ENCODE measurements at regions of chr7 and their contacts with region 1.

Region 1: GRCh38 chr7:44693721-44694285 is 54.8 kb upstream of the ZMIZ2 start:
- DNase-seq: peak; percentile 54 to 58
- ATAC-seq: peak; percentile 80 to 97 (median 90)
- H3K4me3 ChIP-seq: no peak overlapping the region
- H3K27ac ChIP-seq: peak overlapping the region; percentile 57 to 87 (median 72)
- H3K4me1 ChIP-seq: peaks cover 0 to 15% (median 0%) of the 10 kb centered on the region in 9 donors
- H3K27me3 ChIP-seq: no peaks in the 10 kb centered on the region
- CTCF ChIP-seq: no peak

Region 2: DNA sequence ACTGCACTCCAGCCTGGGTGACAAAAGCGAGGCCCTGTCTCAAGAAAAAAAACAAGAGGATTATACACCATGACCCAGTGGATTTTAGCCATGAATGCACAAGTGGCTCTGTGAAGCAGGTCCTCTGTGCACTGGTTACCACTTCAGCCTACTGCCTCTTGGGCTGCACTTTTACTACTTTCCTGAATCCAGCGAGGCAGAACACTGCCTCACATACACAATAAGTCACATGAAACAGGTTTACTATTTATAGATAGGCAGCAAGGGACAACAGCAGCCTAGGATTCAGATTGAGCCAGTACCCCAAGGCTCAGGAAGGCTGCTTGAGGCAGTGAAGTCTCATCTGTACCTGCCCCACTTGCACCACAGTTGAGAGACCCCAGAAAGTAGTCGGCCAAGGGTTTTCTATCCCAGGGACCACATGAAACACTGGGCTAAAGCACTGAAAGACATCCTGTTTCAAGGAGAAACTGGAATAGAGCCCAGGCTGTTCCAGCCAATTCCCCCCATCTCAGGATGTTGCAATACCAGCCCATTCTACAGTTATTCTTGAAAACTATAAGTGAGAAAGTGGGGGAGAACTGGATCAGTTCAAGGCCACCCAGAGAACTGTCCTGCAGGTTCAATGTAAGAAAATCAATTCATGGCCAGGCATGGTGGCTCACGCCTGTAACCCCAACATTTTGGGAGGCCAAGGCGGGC is 97.7 kb before region 1 on chr7:
- intact Hi-C with region 1: loop called in 2 of 10 experiments (anchors 10 kb)
- DNase-seq: peak in 1 of 2 donors; percentile 14
- ATAC-seq: peak; percentile 71 to 97 (median 88)
- H3K4me3 ChIP-seq: no peak overlapping the region
- H3K27ac ChIP-seq: peak overlapping the region; percentile 23 to 77 (median 72)
- H3K4me1 ChIP-seq: peaks cover 0 to 13% (median 8%) of the 10 kb centered on the region in 9 donors
- H3K27me3 ChIP-seq: no peaks in the 10 kb centered on the region
- CTCF ChIP-seq: peak in 2 of 9 donors; percentile 11 to 12

Region 3: DNA sequence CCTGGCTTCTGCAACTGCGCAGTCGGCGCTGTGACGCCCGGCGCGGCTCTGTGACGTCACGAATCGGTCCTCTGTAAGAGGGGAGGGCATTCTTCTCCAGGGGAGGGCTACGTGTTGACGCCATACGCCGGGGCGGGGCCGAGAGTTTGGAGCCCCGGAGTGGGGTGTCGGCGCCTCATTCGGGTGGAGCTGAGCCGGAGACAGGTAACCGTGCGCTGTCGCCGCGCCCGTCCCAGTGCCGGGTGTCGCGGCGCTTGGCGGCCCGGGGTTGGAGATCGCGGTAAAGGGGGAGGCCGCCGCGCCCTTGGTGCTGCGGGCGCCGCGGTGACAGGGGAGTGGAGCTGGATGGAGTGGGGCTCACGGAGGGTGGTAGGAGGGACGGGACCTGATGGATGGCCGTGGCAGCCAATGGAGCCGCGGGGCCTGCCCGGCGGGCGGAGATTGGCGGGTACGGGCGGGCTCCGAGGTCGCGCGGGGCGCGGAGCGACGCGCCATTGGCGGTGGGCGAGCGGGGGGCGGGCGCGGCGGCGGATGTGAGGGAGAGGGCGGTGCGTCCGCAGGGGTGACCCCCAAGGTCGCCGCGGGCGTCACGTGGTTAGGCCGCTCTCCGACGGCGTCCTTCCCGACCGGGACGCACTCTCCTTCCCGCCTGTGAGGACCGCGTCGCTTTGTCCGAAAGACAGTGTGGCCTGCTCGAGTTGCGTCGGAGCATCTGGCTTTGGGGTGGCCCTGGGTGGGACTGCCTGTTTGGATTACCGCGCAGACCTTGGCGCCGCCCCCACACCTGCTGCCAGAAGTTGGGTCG is 87.2 kb before region 1 on chr7 and contains the start of gene OGDH:
- intact Hi-C with region 1: loop called in 1 of 10 experiments (anchors 10 kb)
- DNase-seq: peak; percentile 99
- ATAC-seq: peak; percentile 96 to 99 (median 98)
- H3K4me3 ChIP-seq: peak within 1 kb of the TSS; percentile 39 to 96 (median 72)
- H3K27ac ChIP-seq: peak within 1 kb of the TSS; percentile 86 to 99 (median 98)
- H3K4me1 ChIP-seq: peaks cover 2 to 35% (median 32%) of the 10 kb centered on the region in 9 donors
- H3K27me3 ChIP-seq: no peaks in the 10 kb centered on the region
- CTCF ChIP-seq: peak in 1 of 9 donors; percentile 8
- total RNA-seq, gene OGDH: 500 to 724 (median 679) TPM

Region 4: GRCh38 chr7:44797329-44798251 is 103.8 kb after region 1 on chr7:
- intact Hi-C with region 1: loop called in 1 of 10 experiments (anchors 10 kb)
- DNase-seq: peak; percentile 86 to 93
- ATAC-seq: peak; percentile 77 to 92 (median 87)
- H3K4me3 ChIP-seq: peak overlapping the region; percentile 50 to 86 (median 82)
- H3K27ac ChIP-seq: peak overlapping the region; percentile 97 to 100 (median 100)
- H3K4me1 ChIP-seq: peaks cover 0 to 38% (median 27%) of the 10 kb centered on the region in 9 donors
- H3K27me3 ChIP-seq: no peaks in the 10 kb centered on the region
- CTCF ChIP-seq: peak in 8 of 9 donors; percentile 22 to 65 (median 54)

Region 5: DNA sequence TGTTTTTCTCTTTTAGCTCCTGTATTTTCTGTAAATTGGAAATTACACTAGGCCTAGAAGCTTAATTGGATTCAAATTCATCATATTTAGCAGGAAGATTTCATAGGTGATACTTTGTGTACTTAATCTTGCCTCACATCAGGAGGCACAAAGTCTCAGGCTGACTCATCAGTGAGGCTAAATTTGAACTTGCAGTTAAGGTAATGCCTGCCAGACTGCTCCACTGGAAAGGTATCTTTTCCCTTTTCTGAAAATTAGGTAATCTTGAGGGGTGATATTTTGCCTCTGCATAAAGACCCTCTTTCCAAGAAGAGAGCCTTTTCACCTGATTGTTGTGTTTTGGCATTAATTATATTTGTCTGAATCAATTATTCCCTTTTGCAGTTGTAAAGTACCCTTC is 117.3 kb after region 1 on chr7:
- intact Hi-C with region 1: loop called in 2 of 10 experiments (anchors 10 kb)
- DNase-seq: no peak
- ATAC-seq: no peak
- H3K4me3 ChIP-seq: no peak overlapping the region
- H3K27ac ChIP-seq: no peak overlapping the region
- H3K4me1 ChIP-seq: no peaks in the 10 kb centered on the region
- H3K27me3 ChIP-seq: no peaks in the 10 kb centered on the region
- CTCF ChIP-seq: no peak

Region 6: GRCh38 chr7:45013465-45013967 is 319.7 kb after region 1 on chr7:
- intact Hi-C with region 1: no loop called
- DNase-seq: no peak
- ATAC-seq: no peak
- H3K4me3 ChIP-seq: no peak overlapping the region
- H3K27ac ChIP-seq: no peak overlapping the region
- H3K4me1 ChIP-seq: peaks cover 0 to 15% (median 4%) of the 10 kb centered on the region in 9 donors
- H3K27me3 ChIP-seq: no peaks in the 10 kb centered on the region
- CTCF ChIP-seq: no peak